ENCODE measurements at regions of chr5 and their contacts with region 1.

Region 1: GRCh38 chr5:38193015-38193581 is 65.3 kb upstream of the EGFLAM start:
- DNase-seq: peak in 1 of 2 experiments; percentile 81
- H3K4me3 ChIP-seq: no peak overlapping the region
- H3K27ac ChIP-seq: no peak overlapping the region
- H3K4me1 ChIP-seq: no peaks in the 10 kb centered on the region
- H3K27me3 ChIP-seq: peaks cover 51% of the 10 kb centered on the region
- CTCF ChIP-seq: peak; percentile 98

Region 2: GRCh38 chr5:36739751-36740221 is 1453.3 kb before region 1 on chr5:
- CTCF ChIA-PET with region 1: no interaction called
- POLR2A ChIA-PET with region 1: no interaction called
- intact Hi-C with region 1: loop called (anchors 10 kb)
- DNase-seq: peak; percentile 67 to 85
- H3K4me3 ChIP-seq: no peak overlapping the region
- H3K27ac ChIP-seq: no peak overlapping the region
- H3K4me1 ChIP-seq: peaks cover 12% of the 10 kb centered on the region
- H3K27me3 ChIP-seq: no peaks in the 10 kb centered on the region
- CTCF ChIP-seq: peak; percentile 96

Region 3: DNA sequence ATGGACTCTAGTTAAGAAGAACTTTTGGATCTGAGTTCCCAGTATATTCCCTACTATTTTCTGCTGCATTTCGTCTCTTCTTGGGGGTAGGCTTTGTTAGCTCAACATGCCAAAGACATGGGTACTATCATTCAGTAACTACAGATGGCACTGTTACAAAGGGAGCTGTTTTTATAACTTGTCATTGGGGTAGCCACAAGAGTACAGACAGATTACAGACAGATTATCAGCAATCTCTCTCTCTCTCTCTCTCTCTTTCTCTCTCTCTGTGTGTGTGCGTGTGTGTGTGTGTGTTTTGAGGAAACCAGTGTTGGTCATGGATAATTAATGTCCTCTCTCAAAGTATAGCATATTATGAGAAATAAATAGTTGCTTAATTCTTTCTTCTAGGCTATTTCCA is 697.9 kb before region 1 on chr5:
- CTCF ChIA-PET with region 1: interaction called, 3 read pairs
- POLR2A ChIA-PET with region 1: no interaction called
- intact Hi-C with region 1: loop called (anchors 2 kb)
- DNase-seq: no peak
- H3K4me3 ChIP-seq: no peak overlapping the region
- H3K27ac ChIP-seq: no peak overlapping the region
- H3K4me1 ChIP-seq: peaks cover 15% of the 10 kb centered on the region
- H3K27me3 ChIP-seq: no peaks in the 10 kb centered on the region
- CTCF ChIP-seq: peak; percentile 29; the same call in 1 of the 2 replicates

Region 4: DNA sequence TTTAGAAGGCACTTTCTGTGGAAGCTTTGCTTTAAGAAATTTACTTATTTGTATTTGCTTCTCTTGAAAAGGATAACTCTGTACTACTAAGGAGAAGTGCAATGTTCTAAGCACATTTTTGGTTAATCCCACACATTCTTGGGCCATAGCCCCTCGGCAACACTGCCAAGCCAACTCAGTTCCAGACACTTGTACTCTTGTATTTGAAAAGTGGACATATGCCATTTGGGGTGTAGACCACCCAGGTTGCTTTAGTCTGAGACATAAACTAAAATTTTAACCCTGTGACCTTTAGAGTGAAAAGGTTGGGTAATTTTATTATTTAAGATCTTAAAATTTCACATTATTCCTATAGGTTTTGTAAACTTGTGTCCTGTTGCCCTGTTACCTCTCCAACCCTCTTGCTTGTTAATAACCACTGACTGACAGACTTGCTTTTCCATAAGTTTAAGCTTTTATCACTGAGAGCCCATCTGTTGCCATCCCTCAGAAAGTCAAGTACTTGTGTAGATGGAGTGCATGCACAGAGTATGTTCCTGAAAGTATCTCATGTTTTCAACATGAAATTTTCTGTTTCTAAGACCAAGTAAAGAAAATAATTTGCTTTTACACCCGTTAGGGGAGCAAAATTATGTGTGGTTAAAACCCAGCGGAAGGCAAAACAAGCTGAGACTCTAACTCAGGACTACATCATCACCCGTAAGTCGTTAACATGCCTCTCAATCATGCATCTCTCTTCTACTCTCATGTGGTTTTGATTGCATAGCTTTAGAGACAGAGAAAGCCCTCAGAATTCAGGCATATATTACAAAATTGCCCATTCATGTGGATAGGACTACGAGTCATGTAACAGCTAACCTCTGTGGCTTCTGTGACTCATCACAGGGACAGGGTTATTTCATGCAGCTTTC is 470.6 kb before region 1 on chr5:
- CTCF ChIA-PET with region 1: interaction called, 4 read pairs
- POLR2A ChIA-PET with region 1: no interaction called
- intact Hi-C with region 1: loop called (anchors 1 kb)
- DNase-seq: peak; percentile 32 to 93
- H3K4me3 ChIP-seq: no peak overlapping the region
- H3K27ac ChIP-seq: no peak overlapping the region
- H3K4me1 ChIP-seq: peaks cover 29% of the 10 kb centered on the region
- H3K27me3 ChIP-seq: no peaks in the 10 kb centered on the region
- CTCF ChIP-seq: no peak

Region 5: GRCh38 chr5:37837414-37838032 is 355.6 kb before region 1 on chr5:
- CTCF ChIA-PET with region 1: interaction called, 3 read pairs
- POLR2A ChIA-PET with region 1: no interaction called
- intact Hi-C with region 1: loop called (anchors 1 kb)
- DNase-seq: peak in 1 of 2 experiments; percentile 80
- H3K4me3 ChIP-seq: no peak overlapping the region
- H3K27ac ChIP-seq: no peak overlapping the region
- H3K4me1 ChIP-seq: no peaks in the 10 kb centered on the region
- H3K27me3 ChIP-seq: peaks cover 13% of the 10 kb centered on the region; the same call in 1 of the 2 replicates
- CTCF ChIP-seq: peak; percentile 77

Region 6: GRCh38 chr5:38208782-38209378 is 15.8 kb after region 1 on chr5:
- CTCF ChIA-PET with region 1: no interaction called
- POLR2A ChIA-PET with region 1: no interaction called
- intact Hi-C with region 1: no loop called
- DNase-seq: peak; percentile 32 to 34
- H3K4me3 ChIP-seq: no peak overlapping the region
- H3K27ac ChIP-seq: no peak overlapping the region
- H3K4me1 ChIP-seq: no peaks in the 10 kb centered on the region
- H3K27me3 ChIP-seq: 0 out of 2 replicates have a peak, but pooled peaks cover 7% of the 10 kb centered on the region
- CTCF ChIP-seq: peak; percentile 63